ENCODE measurements at regions of chr2 and their contacts with region 1.

Region 1: GRCh38 chr2:38076606-38077430 is 867 bp upstream of the CYP1B1 start:
- DNase-seq: peak; percentile 86
- ATAC-seq: peak; percentile 80
- H3K4me3 Mint-ChIP-seq: peak overlapping the region; percentile 74
- H3K27ac Mint-ChIP-seq: peak overlapping the region; percentile 78
- H3K4me1 Mint-ChIP-seq: peaks cover 21% of the 10 kb centered on the region
- H3K27me3 Mint-ChIP-seq: peaks cover 55% of the 10 kb centered on the region
- CTCF ChIP-seq: peak; percentile 63

Region 2: GRCh38 chr2:38056216-38056615 is 20.6 kb before region 1 on chr2:
- CTCF ChIA-PET with region 1: no interaction called
- POLR2A ChIA-PET with region 1: no interaction called
- intact Hi-C with region 1: loop called (anchors 1 kb)
- DNase-seq: no peak
- ATAC-seq: no peak
- H3K4me3 Mint-ChIP-seq: no peak overlapping the region
- H3K27ac Mint-ChIP-seq: no peak overlapping the region
- H3K4me1 Mint-ChIP-seq: peaks cover 20% of the 10 kb centered on the region
- H3K27me3 Mint-ChIP-seq: peaks cover 18% of the 10 kb centered on the region
- CTCF ChIP-seq: no peak

Region 3: DNA sequence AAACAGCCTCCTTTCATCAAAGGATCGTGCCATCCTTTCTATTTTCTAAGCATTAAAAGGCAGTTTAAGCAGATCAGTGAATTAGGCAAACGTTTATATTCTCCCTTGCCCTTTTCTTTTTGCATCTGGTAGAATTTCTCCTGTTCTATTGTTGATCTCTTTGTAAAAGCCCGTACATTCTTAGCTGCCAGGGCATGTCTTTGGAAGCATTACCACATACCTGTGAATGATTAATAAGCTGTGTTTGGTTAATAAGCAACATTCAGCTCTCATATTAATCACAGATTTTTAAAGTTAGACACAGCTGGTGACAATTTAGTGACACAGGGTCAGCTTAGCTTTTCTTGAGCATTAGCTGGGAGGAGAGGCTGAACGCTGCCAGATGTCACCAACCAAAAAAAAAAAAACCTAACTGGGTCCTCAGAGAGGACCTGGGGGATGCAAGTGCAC is 32.9 kb after region 1 on chr2:
- CTCF ChIA-PET with region 1: interaction called, 10 read pairs
- POLR2A ChIA-PET with region 1: interaction called, 3 read pairs
- intact Hi-C with region 1: no loop called
- DNase-seq: no peak
- ATAC-seq: no peak
- H3K4me3 Mint-ChIP-seq: no peak overlapping the region
- H3K27ac Mint-ChIP-seq: no peak overlapping the region
- H3K4me1 Mint-ChIP-seq: peaks cover 16% of the 10 kb centered on the region
- H3K27me3 Mint-ChIP-seq: peaks cover 40% of the 10 kb centered on the region
- CTCF ChIP-seq: no peak

Region 4: DNA sequence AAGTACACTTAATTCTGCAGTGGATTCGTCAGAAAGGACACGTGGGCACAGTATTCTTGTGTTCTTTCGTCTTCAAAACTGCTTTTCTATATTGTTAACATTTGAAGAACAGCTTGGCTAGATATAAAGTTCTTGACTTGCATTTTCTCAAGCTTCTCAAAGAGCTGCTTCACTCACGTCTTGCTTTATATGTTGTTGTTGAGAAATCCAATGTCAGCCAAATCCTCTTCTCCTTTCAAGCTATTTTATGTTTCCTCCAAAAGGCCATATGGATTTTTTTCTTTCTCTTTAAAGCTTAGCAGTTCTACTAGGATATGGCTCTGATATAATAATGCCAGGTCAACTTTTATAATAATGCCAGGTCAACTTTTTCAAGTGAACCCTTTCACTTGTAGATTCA is 64.7 kb after region 1 on chr2:
- CTCF ChIA-PET with region 1: no interaction called
- POLR2A ChIA-PET with region 1: no interaction called
- intact Hi-C with region 1: no loop called
- DNase-seq: no peak
- ATAC-seq: no peak
- H3K4me3 Mint-ChIP-seq: no peak overlapping the region
- H3K27ac Mint-ChIP-seq: no peak overlapping the region
- H3K4me1 Mint-ChIP-seq: peaks cover 4% of the 10 kb centered on the region
- H3K27me3 Mint-ChIP-seq: peaks cover 5% of the 10 kb centered on the region
- CTCF ChIP-seq: no peak